Activated T-helper 1 cell treated with anti-CD3 and anti-CD28 coated beads, Interleukin-12 subunit alpha, Interleukin-12 subunit beta, Interleukin-2, Interleukin-4 antibody, amounts not matched to agents 30 ng/mL and 10 ng/mL and 1 ng/mL, durations not matched to agents 14 hours and 24 hours and 36 hours (primary cell): ENCODE measurements at regions of chr9 and their contacts with region 1.

Region 1: GRCh38 chr9:128159784-128160602 is at the start of gene BBLN:
- DNase-seq: peak; percentile 88
- H3K4me3 Mint-ChIP-seq: peak within 1 kb of the TSS; percentile 84
- H3K27ac Mint-ChIP-seq: peak within 1 kb of the TSS; percentile 93
- H3K4me1 Mint-ChIP-seq: peaks cover 14% of the 10 kb centered on the region
- H3K27me3 Mint-ChIP-seq: peaks cover 2% of the 10 kb centered on the region
- total RNA-seq, gene BBLN: 97.3 and 106 TPM in 2 replicates

Region 2: GRCh38 chr9:128098297-128099230 is 61.4 kb before region 1 on chr9:
- intact Hi-C with region 1: no loop called
- DNase-seq: no peak
- H3K4me3 Mint-ChIP-seq: no peak overlapping the region
- H3K27ac Mint-ChIP-seq: peak overlapping the region; percentile 70
- H3K4me1 Mint-ChIP-seq: peaks cover 47% of the 10 kb centered on the region
- H3K27me3 Mint-ChIP-seq: no peaks in the 10 kb centered on the region

Region 3: GRCh38 chr9:128191406-128192046 is 31.5 kb after region 1 on chr9 and contains the start of gene CIZ1:
- intact Hi-C with region 1: loop called (anchors 1 kb)
- DNase-seq: peak; percentile 69
- H3K4me3 Mint-ChIP-seq: peak within 1 kb of the TSS; percentile 98
- H3K27ac Mint-ChIP-seq: peak within 1 kb of the TSS; percentile 96
- H3K4me1 Mint-ChIP-seq: peaks cover 23% of the 10 kb centered on the region
- H3K27me3 Mint-ChIP-seq: no peaks in the 10 kb centered on the region
- total RNA-seq, gene CIZ1: 154 and 158 TPM in 2 replicates

Region 4: DNA sequence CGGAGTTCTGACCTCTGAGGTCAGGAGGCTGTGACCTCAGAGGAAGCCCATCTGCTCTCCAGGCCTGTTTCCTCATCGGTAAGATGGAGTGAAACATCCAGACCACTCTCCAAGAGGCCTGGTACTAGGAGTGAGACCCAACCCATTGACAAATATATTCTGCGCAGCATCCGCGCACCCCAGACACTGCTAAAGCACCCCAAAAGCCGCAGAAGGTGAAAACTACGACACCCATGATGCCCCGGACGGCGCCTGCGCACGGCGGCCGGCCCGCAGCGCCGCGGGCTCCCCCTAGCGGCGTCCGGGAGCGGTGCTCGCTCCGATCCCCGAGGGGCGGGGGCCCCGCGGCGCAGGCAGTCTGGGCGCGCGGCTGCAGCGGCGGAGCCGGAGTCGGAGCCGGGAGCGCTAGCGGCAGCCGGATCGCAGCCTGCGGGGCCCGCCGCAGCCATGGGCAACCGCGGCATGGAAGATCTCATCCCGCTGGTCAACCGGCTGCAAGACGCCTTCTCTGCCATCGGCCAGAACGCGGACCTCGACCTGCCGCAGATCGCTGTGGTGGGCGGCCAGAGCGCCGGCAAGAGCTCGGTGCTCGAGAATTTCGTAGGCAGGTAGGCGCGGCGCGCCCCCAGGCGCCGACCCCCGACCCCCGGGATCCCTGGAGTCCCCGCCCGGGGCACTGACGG is 43.2 kb after region 1 on chr9 and contains the start of gene DNM1:
- intact Hi-C with region 1: loop called (anchors 1 kb)
- DNase-seq: peak; percentile 75
- H3K4me3 Mint-ChIP-seq: peak within 1 kb of the TSS; percentile 78
- H3K27ac Mint-ChIP-seq: peak within 1 kb of the TSS; percentile 83
- H3K4me1 Mint-ChIP-seq: peaks cover 21% of the 10 kb centered on the region
- H3K27me3 Mint-ChIP-seq: peaks cover 27% of the 10 kb centered on the region
- total RNA-seq, gene DNM1: 1.4 and 1.8 TPM in 2 replicates

Region 5: DNA sequence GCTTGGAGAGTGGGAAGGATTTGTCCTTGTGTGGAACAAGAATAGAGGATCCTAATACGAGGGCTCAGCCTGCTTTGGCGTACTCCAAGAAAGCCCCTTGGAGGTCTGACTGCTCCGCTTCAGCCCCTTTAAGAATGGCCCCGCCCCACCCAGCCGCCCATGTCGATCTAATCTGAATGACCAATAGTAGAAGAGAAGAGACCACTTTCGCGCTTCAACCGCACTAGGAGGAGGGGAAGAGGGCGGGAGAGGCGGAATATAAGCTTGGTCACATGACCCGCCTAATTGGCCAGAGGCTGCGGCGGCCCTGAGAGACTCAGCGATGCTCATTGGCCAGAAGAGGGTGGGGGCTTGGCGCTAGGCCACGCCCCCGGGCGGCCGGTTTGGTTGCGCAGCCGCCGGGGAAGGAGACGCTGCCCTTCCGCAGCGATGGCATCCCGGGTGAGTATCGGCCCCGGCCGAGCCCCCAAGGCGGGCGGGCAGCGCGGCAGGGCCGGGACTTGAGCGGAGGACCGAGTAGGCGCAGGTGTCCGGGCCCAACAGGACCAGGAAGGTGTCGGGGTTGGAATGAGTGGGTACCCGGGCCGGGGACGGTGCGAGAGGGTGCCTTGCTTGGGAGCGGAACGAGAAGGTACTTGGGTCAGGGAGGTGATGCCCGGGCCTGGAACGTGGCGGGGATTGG is 876.4 kb after region 1 on chr9 and contains the start of gene MIGA2:
- intact Hi-C with region 1: loop called (anchors 1 kb)
- DNase-seq: peak; percentile 95
- H3K4me3 Mint-ChIP-seq: peak within 1 kb of the TSS; percentile 97
- H3K27ac Mint-ChIP-seq: peak within 1 kb of the TSS; percentile 79
- H3K4me1 Mint-ChIP-seq: peaks cover 20% of the 10 kb centered on the region
- H3K27me3 Mint-ChIP-seq: peaks cover 2% of the 10 kb centered on the region
- total RNA-seq, gene MIGA2: 43.4 and 43.8 TPM in 2 replicates